Lower leg skin (tissue), 4 donors: ENCODE measurements at regions of chr11 and their contacts with region 1.

Region 1: GRCh38 chr11:129930296-129930695 is 34.9 kb upstream of the NFRKB start:
- DNase-seq: no peak
- H3K4me3 ChIP-seq: no peak overlapping the region
- CTCF ChIP-seq: no peak
- POLR2A ChIP-seq: no peak

Region 2: DNA sequence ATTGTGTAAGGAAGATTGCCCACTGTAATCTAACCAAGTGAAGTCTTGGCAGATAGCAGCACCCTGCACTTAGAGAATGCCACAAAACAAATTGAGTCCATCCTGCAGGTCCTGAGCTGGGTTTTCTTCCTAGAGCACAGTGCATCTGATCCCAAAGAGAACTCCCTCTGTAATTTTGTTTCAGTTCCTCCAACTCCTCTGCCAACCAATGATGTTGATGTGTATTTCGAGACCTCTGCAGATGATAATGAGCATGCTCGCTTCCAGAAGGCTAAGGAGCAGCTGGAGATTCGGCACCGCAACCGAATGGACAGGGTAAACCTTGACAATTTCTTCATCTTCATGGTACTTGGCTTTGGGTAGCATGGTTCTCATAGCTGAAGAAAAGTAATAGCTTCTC is 196.2 kb after region 1 on chr11:
- intact Hi-C with region 1: loop called (anchors 5 kb)
- DNase-seq: no peak
- H3K4me3 ChIP-seq: no peak overlapping the region
- CTCF ChIP-seq: no peak
- POLR2A ChIP-seq: no peak

Region 3: GRCh38 chr11:131859538-131860210 is 1929.4 kb after region 1 on chr11:
- intact Hi-C with region 1: no loop called
- DNase-seq: no peak
- H3K4me3 ChIP-seq: no peak overlapping the region
- CTCF ChIP-seq: no peak
- POLR2A ChIP-seq: no peak